HepG2 (cell line): ENCODE measurements at regions of chr2 and their contacts with region 1.

Region 1: DNA sequence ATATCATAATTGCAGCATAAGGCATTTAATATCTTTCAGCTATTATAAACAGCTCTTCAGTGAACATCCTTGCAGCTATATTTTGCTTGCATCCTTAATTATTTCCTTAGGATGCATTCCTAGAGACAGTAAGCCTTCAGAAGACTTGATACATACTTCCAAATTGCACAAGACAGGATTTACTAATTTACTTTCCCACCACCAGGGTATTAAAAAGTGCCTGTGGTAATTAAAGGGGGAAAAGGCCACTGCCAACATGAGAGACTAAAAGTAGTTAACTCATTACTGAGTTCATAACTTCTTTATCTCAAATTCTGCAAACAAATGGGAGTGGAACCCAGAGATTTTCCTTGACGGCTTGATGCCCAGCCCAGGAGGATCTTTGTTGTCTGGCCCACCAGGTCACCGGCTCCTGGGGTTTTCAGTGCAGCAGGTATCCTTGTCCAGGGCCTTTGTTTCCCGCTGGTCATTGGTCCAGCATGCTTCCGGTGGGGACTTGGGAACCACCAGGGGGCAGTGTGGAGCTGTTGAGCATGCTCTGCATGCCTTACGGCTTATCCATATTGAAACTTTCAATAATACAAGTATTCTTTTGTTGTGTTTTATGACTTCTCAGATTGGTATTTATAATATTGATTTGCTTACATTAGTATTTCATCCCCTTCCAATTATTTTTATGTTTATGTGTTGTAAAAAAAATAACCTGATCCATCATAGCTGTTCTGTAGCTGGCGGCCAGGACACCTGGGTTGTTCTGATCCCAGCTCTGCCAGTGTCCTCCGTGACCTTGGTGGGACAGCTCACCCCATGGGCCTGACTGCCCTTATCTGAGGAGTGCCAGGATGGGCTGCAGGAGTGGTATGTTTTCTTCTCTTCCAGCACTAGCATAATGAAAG is 61.4 kb downstream of the TGOLN2 start:
- DNase-seq: peak; percentile 70
- ATAC-seq: peak; percentile 85
- H3K4me3 ChIP-seq: no peak overlapping the region
- H3K27ac ChIP-seq: no peak overlapping the region
- H3K4me1 ChIP-seq: peaks cover 16% of the 10 kb centered on the region
- H3K27me3 ChIP-seq: peaks cover 2 to 34% of the 10 kb centered on the region in 2 experiments; a peak in 3 of 5 replicates
- CTCF ChIP-seq: peak; percentile 90
- EP300 ChIP-seq: no peak
- POLR2A ChIP-seq: no peak
- RAD21 ChIP-seq: peak; percentile 75

Region 2: DNA sequence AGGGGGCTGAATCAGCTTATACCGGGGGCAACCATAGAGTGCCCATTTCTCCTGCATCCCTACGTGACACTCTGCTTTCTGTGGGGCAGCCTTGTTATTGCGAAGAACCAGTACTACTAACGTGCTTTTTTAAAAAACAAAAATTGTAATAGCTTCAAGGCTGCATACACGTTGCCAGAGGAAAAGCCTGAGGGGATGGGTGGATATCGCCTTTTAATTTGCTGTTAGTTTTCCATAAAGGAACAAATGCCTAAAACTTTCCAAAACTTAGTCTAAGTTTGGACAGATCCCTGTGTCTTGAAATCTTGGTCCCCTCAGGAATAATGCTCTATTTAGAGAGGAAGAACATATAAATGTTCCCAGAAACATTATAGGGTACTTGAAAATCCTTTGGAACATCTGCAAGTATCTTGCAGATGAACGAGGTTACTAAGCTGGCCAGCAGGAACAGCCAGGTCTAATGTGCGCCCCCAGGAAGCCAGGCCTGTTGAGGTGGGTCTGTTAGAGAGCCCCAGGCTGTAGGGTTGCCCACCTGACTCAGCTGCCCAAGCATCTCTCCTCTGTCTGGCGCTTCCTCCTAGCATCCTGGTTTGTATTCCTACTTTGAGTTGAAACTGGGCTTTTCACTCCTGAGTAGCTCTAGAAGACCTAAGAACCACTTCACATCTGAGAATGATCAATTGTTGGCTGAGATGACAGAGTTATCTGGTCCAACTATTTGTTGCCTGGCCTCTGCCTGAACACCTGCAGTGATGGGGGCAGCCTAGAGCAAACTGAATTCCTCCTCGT is 35.5 kb before region 1 on chr2:
- CTCF ChIA-PET with region 1: no interaction called
- POLR2A ChIA-PET with region 1: no interaction called
- in situ Hi-C with region 1: no loop called
- intact Hi-C with region 1: no loop called
- DNase-seq: no peak
- ATAC-seq: peak; percentile 86
- H3K4me3 ChIP-seq: no peak overlapping the region
- H3K27ac ChIP-seq: no peak overlapping the region
- H3K4me1 ChIP-seq: no peaks in the 10 kb centered on the region
- H3K27me3 ChIP-seq: peaks cover 0 to 11% of the 10 kb centered on the region in 2 experiments; a peak in 3 of 5 replicates
- CTCF ChIP-seq: peak; percentile 43
- EP300 ChIP-seq: no peak
- POLR2A ChIP-seq: no peak
- RAD21 ChIP-seq: no peak

Region 3: DNA sequence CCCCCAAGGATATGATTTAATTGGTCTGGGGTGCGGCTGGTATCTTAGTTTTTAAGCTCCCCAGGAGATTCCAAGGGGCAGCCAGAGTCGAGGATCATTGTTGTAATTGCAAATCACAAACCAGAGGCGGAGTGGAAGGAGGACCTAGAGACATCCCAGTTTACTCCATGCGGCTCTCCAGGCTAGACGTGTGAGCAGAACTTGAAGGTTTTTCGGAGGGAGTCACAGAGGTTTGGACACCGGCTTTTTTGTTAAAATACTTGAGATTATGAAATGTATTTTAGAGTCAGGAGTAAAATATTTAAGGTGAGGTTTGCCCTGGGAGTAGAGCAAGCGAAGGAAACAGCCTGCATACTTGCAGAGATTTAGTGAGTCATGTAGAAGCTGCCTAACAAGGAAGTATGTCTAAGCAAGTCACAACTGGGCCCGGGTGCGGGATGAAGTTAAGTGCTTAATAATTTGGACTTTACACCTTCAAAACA is 21.9 kb after region 1 on chr2:
- CTCF ChIA-PET with region 1: interaction called, 47 read pairs
- POLR2A ChIA-PET with region 1: no interaction called
- in situ Hi-C with region 1: no loop called
- intact Hi-C with region 1: loop called (anchors 1 kb)
- DNase-seq: no peak
- ATAC-seq: no peak
- H3K4me3 ChIP-seq: no peak overlapping the region
- H3K27ac ChIP-seq: no peak overlapping the region
- H3K4me1 ChIP-seq: peaks cover 13% of the 10 kb centered on the region
- H3K27me3 ChIP-seq: peaks cover 0 to 36% of the 10 kb centered on the region in 2 experiments; a peak in 3 of 5 replicates
- CTCF ChIP-seq: no peak
- EP300 ChIP-seq: no peak
- POLR2A ChIP-seq: no peak
- RAD21 ChIP-seq: no peak

Region 4: DNA sequence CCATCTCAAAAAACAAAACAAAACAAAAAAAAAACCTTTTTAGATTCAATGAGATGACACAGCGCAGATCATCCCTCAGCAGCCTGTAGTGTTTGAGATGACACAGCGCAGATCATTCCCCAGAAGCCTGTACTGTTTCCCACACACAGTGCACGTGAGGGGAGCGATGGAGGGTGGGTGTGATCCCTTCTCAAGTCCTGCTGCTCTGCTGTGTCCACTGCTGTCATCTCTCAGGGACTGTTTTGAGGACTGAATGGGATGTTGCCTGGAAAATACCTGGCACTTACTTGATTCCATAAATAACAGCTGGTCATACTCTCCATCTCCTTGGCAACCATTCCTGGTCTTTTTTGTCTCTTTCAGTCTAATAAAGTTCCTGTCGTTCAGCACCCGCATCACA is 35.7 kb after region 1 on chr2:
- CTCF ChIA-PET with region 1: interaction called, 37 read pairs
- POLR2A ChIA-PET with region 1: no interaction called
- in situ Hi-C with region 1: no loop called
- intact Hi-C with region 1: loop called (anchors 1 kb)
- DNase-seq: no peak
- ATAC-seq: no peak
- H3K4me3 ChIP-seq: no peak overlapping the region
- H3K27ac ChIP-seq: no peak overlapping the region
- H3K4me1 ChIP-seq: peaks cover 72% of the 10 kb centered on the region
- H3K27me3 ChIP-seq: peaks cover 0 to 11% of the 10 kb centered on the region in 2 experiments; a peak in 3 of 5 replicates
- CTCF ChIP-seq: no peak
- EP300 ChIP-seq: no peak
- POLR2A ChIP-seq: no peak
- RAD21 ChIP-seq: no peak

Region 5: GRCh38 chr2:85475799-85476490 is 209.6 kb after region 1 on chr2:
- CTCF ChIA-PET with region 1: no interaction called
- POLR2A ChIA-PET with region 1: no interaction called
- in situ Hi-C with region 1: no loop called
- intact Hi-C with region 1: no loop called
- DNase-seq: peak; percentile 74
- ATAC-seq: peak; percentile 73
- H3K4me3 ChIP-seq: no peak overlapping the region; a peak in 1 of 6 replicates
- H3K27ac ChIP-seq: peak overlapping the region; percentile 30
- H3K4me1 ChIP-seq: peaks cover 52% of the 10 kb centered on the region
- H3K27me3 ChIP-seq: no peaks in the 10 kb centered on the region
- CTCF ChIP-seq: no peak
- EP300 ChIP-seq: peak in 1 of 2 experiments; percentile 47; a peak in 1 of 4 replicates
- POLR2A ChIP-seq: no peak
- RAD21 ChIP-seq: no peak

Region 6: GRCh38 chr2:85511008-85511811 is 244.8 kb after region 1 on chr2:
- CTCF ChIA-PET with region 1: no interaction called
- POLR2A ChIA-PET with region 1: no interaction called
- in situ Hi-C with region 1: no loop called
- intact Hi-C with region 1: no loop called
- DNase-seq: no peak
- ATAC-seq: no peak
- H3K4me3 ChIP-seq: no peak overlapping the region
- H3K27ac ChIP-seq: no peak overlapping the region
- H3K4me1 ChIP-seq: peaks cover 20% of the 10 kb centered on the region
- H3K27me3 ChIP-seq: 0 out of 5 replicates have a peak, but pooled peaks cover 0 to 2% of the 10 kb centered on the region in 2 experiments
- CTCF ChIP-seq: no peak
- EP300 ChIP-seq: no peak
- POLR2A ChIP-seq: no peak
- RAD21 ChIP-seq: no peak